Vagina (tissue), 2 donors: ENCODE measurements at regions of chr3 and their contacts with region 1.

Region 1: DNA sequence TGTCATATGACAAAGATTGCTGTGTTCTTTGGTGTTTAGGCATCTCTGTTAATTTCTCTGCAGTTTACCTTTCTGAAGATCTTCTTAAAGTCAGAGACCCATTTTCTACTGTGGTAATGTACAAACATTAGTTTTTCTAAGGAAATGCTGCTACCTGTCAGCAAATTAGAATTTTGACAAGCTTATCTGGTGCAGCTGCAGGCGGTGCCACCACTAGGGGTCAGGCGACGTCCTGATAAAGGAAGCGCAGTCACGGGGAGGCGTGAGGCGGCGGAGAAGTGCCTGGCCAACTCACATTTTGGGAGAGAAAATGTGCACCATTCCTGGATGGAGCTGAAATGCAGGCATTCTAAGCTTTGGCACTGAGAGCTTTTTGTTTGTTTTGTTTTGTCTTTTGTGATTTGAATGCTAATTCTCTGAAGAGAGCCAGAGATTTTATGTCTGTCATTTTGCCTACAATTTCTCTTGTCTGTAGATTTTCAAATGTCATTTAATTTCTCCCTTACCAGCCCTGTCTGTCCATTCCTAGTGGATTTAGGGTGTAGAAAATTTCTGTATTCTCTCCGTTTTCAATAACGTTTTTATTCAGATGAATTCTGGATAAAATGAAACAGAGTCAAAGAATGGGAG is 24.9 kb upstream of the SIAH2 start:
- DNase-seq: no peak
- H3K4me3 ChIP-seq: no peak overlapping the region
- H3K27ac ChIP-seq: no peak overlapping the region
- H3K4me1 ChIP-seq: no peaks in the 10 kb centered on the region
- H3K27me3 ChIP-seq: no peaks in the 10 kb centered on the region
- CTCF ChIP-seq: peak; percentile 81 to 95 (median 92)
- POLR2A ChIP-seq: no peak

Region 2: DNA sequence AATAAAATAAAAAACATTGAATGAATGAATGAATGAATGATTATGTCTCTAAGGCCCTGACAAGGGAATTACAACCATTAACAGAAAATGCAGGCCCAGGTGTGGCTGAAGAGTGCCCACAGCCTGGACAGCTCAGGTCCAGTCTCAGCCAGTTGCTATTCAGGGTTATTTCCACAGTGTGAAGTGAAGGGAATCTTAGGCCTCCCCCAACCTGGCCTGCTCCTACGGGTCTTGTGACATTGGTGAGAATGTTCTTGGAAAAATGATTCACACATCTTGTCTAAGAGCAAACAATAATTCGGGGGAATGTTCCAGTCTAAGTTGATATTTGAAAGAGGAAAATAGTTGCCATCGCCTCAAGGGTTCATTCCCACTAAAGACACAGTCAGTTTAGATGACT is 80.4 kb after region 1 on chr3:
- intact Hi-C with region 1: loop called (anchors 5 kb)
- DNase-seq: no peak
- H3K4me3 ChIP-seq: no peak overlapping the region
- H3K27ac ChIP-seq: peak overlapping the region; percentile 14
- H3K4me1 ChIP-seq: no peaks in the 10 kb centered on the region
- H3K27me3 ChIP-seq: no peaks in the 10 kb centered on the region
- CTCF ChIP-seq: no peak
- POLR2A ChIP-seq: no peak

Region 3: DNA sequence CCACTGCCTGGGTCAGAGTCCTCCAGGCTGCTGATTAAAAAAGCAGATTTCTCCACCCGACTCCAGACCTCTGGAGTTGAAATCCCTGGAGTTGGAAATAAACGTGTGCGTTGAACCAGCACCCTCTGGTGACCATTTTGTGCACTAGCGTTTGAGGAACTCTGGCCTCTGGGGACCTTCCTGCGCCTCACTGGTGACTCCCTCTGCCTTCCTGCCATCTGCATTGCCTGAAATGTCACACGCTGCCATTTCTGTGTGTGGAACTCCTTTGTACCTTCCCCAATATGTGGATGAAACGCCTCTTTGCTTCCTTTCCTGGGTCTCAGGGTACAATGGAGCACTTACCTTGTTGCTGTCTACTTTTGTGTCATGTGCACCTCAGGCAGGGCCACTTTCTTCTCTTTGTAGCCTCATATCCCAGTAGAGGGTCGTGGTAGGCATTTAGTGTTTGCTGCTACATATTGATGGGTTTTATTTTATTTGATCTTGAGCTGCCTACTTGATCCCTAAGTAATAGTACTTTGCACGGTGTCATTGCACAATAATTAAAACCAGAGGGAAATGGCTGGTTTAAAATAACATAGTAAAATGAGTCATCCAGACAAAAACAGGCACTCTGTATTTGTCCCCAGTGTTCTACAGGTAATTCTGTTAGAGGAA is 358.3 kb after region 1 on chr3:
- intact Hi-C with region 1: loop called (anchors 5 kb)
- DNase-seq: no peak
- H3K4me3 ChIP-seq: no peak overlapping the region
- H3K27ac ChIP-seq: peak overlapping the region; percentile 72
- H3K4me1 ChIP-seq: peaks cover 12% of the 10 kb centered on the region
- H3K27me3 ChIP-seq: no peaks in the 10 kb centered on the region
- CTCF ChIP-seq: peak; percentile 57 to 92 (median 83)
- POLR2A ChIP-seq: no peak